IMR-90 (cell line): ENCODE measurements at regions of chr7 and their contacts with region 1.

Region 1: DNA sequence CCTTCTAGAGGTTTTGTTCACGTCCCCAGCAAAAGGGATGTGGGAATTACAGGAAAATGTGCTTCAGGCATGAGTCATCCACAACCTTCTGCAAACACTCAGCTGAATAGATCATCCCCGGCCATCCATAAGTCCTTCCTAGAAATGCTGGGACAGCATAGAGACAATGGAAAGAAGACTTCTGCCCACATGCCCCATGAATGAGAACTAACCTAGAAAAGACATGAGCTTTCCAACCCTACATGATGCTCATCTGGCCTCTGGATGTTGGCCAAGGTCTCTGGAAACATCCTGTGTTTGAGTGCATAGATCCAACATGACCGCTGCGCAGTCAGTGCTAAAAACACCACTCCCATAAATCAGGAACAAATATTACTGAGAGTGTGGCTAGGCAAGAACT is 277.5 kb downstream of the PLXNA4 start:
- DNase-seq: peak; percentile 43
- ATAC-seq: peak; percentile 44; the same call in 1 of the 2 replicates
- H3K4me3 ChIP-seq: no peak overlapping the region
- H3K27ac ChIP-seq: no peak overlapping the region
- H3K4me1 ChIP-seq: no peaks in the 10 kb centered on the region
- H3K27me3 ChIP-seq: no peaks in the 10 kb centered on the region
- CTCF ChIP-seq: no peak
- POLR2A ChIP-seq: no peak
- RAD21 ChIP-seq: no peak

Region 2: GRCh38 chr7:131717181-131717580 is 581.6 kb before region 1 on chr7:
- CTCF ChIA-PET with region 1: no interaction called
- POLR2A ChIA-PET with region 1: no interaction called
- dilution Hi-C with region 1: no loop called
- in situ Hi-C with region 1: no loop called
- intact Hi-C with region 1: loop called (anchors 5 kb)
- DNase-seq: no peak
- ATAC-seq: no peak
- H3K4me3 ChIP-seq: no peak overlapping the region
- H3K27ac ChIP-seq: no peak overlapping the region
- H3K4me1 ChIP-seq: no peaks in the 10 kb centered on the region
- H3K27me3 ChIP-seq: no peaks in the 10 kb centered on the region; the same call in 1 of the 2 replicates
- CTCF ChIP-seq: no peak
- POLR2A ChIP-seq: no peak
- RAD21 ChIP-seq: no peak

Region 3: GRCh38 chr7:132437730-132438129 is 138.9 kb after region 1 on chr7:
- CTCF ChIA-PET with region 1: no interaction called
- POLR2A ChIA-PET with region 1: no interaction called
- dilution Hi-C with region 1: no loop called
- in situ Hi-C with region 1: no loop called
- intact Hi-C with region 1: no loop called
- DNase-seq: no peak
- ATAC-seq: no peak
- H3K4me3 ChIP-seq: no peak overlapping the region
- H3K27ac ChIP-seq: no peak overlapping the region
- H3K4me1 ChIP-seq: no peaks in the 10 kb centered on the region
- H3K27me3 ChIP-seq: no peaks in the 10 kb centered on the region
- CTCF ChIP-seq: no peak
- POLR2A ChIP-seq: no peak
- RAD21 ChIP-seq: no peak